Activated T-helper 1 cell treated with anti-CD3 and anti-CD28 coated beads, Interleukin-12 subunit alpha, Interleukin-12 subunit beta, Interleukin-2, Interleukin-4 antibody, amounts not matched to agents 30 ng/mL and 10 ng/mL and 1 ng/mL, durations not matched to agents 14 hours and 24 hours and 36 hours (primary cell): ENCODE measurements at regions of chr1 and their contacts with region 1.

Region 1: DNA sequence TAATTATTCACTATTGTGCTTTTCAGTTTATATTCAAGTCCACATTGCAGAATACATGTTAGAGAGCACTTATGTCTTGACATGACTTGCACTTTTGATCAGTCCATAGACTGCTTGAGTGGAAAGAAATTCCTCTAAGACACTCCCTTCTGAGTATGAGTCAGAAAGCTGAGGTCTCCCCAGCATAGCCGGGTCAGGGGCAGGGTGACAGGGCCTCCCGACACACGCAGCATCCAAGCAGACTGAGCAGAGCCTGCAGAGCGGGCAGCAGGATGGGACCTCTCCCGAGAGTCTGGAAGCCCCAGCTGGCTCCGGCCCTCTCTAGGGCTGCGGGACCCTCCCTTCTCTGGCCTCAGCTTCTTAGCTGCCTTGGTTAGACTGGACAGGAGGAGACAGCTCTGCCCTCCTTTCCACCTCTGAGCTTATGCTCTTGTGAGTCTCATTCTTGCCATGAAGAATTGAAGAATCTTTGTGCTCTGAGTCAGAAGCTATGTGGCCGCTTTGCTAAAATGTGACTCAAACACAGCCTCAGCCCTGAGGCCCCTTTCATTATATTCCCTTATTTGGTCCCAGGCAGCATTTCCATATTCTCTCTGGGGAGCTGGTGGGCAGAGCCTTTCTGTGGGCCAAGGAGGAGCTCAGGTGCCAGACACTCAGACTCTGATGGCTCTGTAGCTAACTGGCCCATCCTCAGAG is 11.2 kb upstream of the CAPN2 start:
- DNase-seq: no peak
- H3K4me3 Mint-ChIP-seq: no peak overlapping the region
- H3K27ac Mint-ChIP-seq: peak overlapping the region; percentile 83
- H3K4me1 Mint-ChIP-seq: peaks cover 54% of the 10 kb centered on the region
- H3K27me3 Mint-ChIP-seq: peaks cover 4% of the 10 kb centered on the region

Region 2: GRCh38 chr1:223386013-223386412 is 315.1 kb before region 1 on chr1:
- intact Hi-C with region 1: no loop called
- DNase-seq: no peak
- H3K4me3 Mint-ChIP-seq: no peak overlapping the region
- H3K27ac Mint-ChIP-seq: no peak overlapping the region
- H3K4me1 Mint-ChIP-seq: no peaks in the 10 kb centered on the region
- H3K27me3 Mint-ChIP-seq: no peaks in the 10 kb centered on the region

Region 3: DNA sequence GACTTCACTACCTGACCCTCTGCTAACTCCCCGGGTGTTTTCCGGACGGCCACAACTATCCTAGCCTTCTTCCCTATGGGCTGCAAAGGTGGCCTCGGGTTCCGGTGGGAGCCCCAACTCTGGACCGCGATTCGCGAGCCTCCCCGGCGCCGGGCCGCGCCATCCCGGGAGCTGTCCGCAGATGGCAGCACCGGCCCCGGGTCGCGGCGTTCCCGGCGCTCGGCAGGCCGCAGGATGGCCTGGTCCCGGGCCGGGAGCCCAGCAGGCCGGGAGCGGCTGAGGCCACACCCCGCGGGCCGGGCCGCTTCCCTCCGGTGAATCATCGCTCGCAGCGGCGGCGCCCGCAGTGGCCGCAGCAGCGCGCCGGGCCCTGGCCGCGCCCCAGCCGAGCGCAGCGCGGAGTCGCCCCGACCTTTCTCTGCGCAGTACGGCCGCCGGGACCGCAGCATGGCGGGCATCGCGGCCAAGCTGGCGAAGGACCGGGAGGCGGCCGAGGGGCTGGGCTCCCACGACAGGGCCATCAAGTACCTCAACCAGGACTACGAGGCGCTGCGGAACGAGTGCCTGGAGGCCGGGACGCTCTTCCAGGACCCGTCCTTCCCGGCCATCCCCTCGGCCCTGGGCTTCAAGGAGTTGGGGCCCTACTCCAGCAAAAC is 11.2 kb after region 1 on chr1 and contains the start of gene CAPN2:
- intact Hi-C with region 1: loop called (anchors 1 kb)
- DNase-seq: peak; percentile 58
- H3K4me3 Mint-ChIP-seq: peak within 1 kb of the TSS; percentile 80
- H3K27ac Mint-ChIP-seq: peak within 1 kb of the TSS; percentile 88
- H3K4me1 Mint-ChIP-seq: peaks cover 62% of the 10 kb centered on the region
- H3K27me3 Mint-ChIP-seq: peaks cover 2% of the 10 kb centered on the region
- total RNA-seq, gene CAPN2: 66.3 and 70.4 TPM in 2 replicates